PC-9 (cell line): ENCODE measurements at regions of chr14 and their contacts with region 1.

Region 1: GRCh38 chr14:53953002-53953827 is 3.4 kb downstream of the BMP4 start:
- DNase-seq: peak; percentile 40 to 80
- H3K4me3 ChIP-seq: peak overlapping the region; percentile 80
- H3K27ac ChIP-seq: peak overlapping the region; percentile 18
- H3K4me1 ChIP-seq: peaks cover 14% of the 10 kb centered on the region
- H3K27me3 ChIP-seq: no peaks in the 10 kb centered on the region
- CTCF ChIP-seq: no peak

Region 2: GRCh38 chr14:53265025-53265424 is 688.2 kb before region 1 on chr14:
- CTCF ChIA-PET with region 1: no interaction called
- POLR2A ChIA-PET with region 1: no interaction called
- intact Hi-C with region 1: no loop called
- DNase-seq: peak; percentile 7 to 63
- H3K4me3 ChIP-seq: no peak overlapping the region
- H3K27ac ChIP-seq: peak overlapping the region; percentile 31
- H3K4me1 ChIP-seq: peaks cover 17% of the 10 kb centered on the region
- H3K27me3 ChIP-seq: no peaks in the 10 kb centered on the region
- CTCF ChIP-seq: no peak

Region 3: GRCh38 chr14:53539489-53540126 is 413.6 kb before region 1 on chr14:
- CTCF ChIA-PET with region 1: interaction called, 3 read pairs
- POLR2A ChIA-PET with region 1: interaction called, 11 read pairs
- intact Hi-C with region 1: loop called (anchors 1 kb)
- DNase-seq: peak; percentile 45 to 74
- H3K4me3 ChIP-seq: no peak overlapping the region
- H3K27ac ChIP-seq: no peak overlapping the region
- H3K4me1 ChIP-seq: no peaks in the 10 kb centered on the region
- H3K27me3 ChIP-seq: no peaks in the 10 kb centered on the region
- CTCF ChIP-seq: peak; percentile 88

Region 4: GRCh38 chr14:53938192-53938842 is 14.9 kb before region 1 on chr14:
- CTCF ChIA-PET with region 1: no interaction called
- POLR2A ChIA-PET with region 1: interaction called, 10 read pairs
- intact Hi-C with region 1: no loop called
- DNase-seq: peak in 1 of 2 experiments; percentile 61
- H3K4me3 ChIP-seq: no peak overlapping the region
- H3K27ac ChIP-seq: no peak overlapping the region
- H3K4me1 ChIP-seq: 0 out of 2 replicates have a peak, but pooled peaks cover 9% of the 10 kb centered on the region
- H3K27me3 ChIP-seq: no peaks in the 10 kb centered on the region
- CTCF ChIP-seq: no peak

Region 5: DNA sequence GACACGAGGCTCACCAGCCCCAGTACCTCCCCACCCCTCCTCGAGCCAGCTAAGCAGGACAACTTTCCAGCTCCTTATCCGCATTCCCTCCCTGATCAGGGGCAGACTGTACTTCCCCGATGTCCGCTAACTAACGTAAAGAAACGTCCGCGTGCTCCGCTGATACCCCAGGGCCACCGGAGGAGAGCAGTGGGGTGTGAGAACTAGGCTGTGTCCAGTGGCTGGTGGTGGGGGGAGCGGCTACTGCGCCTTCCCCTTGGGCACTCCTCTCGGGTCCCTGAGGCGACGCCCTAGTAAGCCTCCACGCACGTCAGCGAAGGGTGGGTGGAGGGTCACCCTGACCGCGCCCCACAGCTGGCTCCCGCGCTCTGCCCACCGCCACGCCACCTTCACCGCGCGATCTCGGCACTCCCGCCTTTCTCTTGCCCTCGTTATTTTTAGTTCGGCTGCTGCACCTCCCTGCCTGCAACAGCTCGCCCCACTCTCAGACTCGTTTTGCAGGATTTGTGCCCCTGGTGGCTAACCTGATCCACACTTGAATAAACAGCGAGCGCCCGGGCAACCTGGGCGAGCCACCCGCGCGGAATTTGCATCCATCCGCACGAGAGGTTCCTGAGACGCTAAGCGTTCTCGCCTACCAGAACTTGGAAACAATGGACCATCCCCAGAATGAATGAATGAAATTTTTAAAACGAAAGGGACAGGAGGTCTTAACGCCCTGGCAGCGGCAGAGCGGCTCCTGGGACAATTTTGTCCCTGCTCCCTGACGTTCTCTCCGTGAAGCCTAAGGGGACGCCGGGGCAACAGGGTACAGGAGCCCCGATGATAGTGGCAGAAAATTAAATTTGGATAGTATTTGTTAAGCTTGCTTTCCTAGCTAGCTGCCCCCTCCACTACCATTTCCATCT is 10.4 kb after region 1 on chr14:
- CTCF ChIA-PET with region 1: no interaction called
- POLR2A ChIA-PET with region 1: interaction called, 20 read pairs
- intact Hi-C with region 1: no loop called
- DNase-seq: peak in 1 of 2 experiments; percentile 50
- H3K4me3 ChIP-seq: no peak overlapping the region
- H3K27ac ChIP-seq: no peak overlapping the region
- H3K4me1 ChIP-seq: no peaks in the 10 kb centered on the region
- H3K27me3 ChIP-seq: no peaks in the 10 kb centered on the region
- CTCF ChIP-seq: no peak

Region 6: GRCh38 chr14:54169254-54169924 is 216.2 kb after region 1 on chr14:
- CTCF ChIA-PET with region 1: interaction called, 9 read pairs
- POLR2A ChIA-PET with region 1: interaction called, 4 read pairs
- intact Hi-C with region 1: loop called (anchors 1 kb)
- DNase-seq: peak; percentile 56 to 88
- H3K4me3 ChIP-seq: no peak overlapping the region
- H3K27ac ChIP-seq: peak overlapping the region; percentile 78
- H3K4me1 ChIP-seq: peaks cover 29% of the 10 kb centered on the region
- H3K27me3 ChIP-seq: no peaks in the 10 kb centered on the region
- CTCF ChIP-seq: no peak

Region 7: GRCh38 chr14:54338696-54339317 is 385.6 kb after region 1 on chr14:
- CTCF ChIA-PET with region 1: interaction called, 5 read pairs
- POLR2A ChIA-PET with region 1: no interaction called
- intact Hi-C with region 1: loop called (anchors 2 kb)
- DNase-seq: peak; percentile 39 to 57
- H3K4me3 ChIP-seq: no peak overlapping the region
- H3K27ac ChIP-seq: no peak overlapping the region
- H3K4me1 ChIP-seq: peaks cover 13% of the 10 kb centered on the region
- H3K27me3 ChIP-seq: no peaks in the 10 kb centered on the region
- CTCF ChIP-seq: peak; percentile 73